Activated naive CD4-positive, alpha-beta T cell treated with anti-CD3 and anti-CD28 coated beads for 36 hours (primary cell): ENCODE measurements at regions of chr14 and their contacts with region 1.

Region 1: DNA sequence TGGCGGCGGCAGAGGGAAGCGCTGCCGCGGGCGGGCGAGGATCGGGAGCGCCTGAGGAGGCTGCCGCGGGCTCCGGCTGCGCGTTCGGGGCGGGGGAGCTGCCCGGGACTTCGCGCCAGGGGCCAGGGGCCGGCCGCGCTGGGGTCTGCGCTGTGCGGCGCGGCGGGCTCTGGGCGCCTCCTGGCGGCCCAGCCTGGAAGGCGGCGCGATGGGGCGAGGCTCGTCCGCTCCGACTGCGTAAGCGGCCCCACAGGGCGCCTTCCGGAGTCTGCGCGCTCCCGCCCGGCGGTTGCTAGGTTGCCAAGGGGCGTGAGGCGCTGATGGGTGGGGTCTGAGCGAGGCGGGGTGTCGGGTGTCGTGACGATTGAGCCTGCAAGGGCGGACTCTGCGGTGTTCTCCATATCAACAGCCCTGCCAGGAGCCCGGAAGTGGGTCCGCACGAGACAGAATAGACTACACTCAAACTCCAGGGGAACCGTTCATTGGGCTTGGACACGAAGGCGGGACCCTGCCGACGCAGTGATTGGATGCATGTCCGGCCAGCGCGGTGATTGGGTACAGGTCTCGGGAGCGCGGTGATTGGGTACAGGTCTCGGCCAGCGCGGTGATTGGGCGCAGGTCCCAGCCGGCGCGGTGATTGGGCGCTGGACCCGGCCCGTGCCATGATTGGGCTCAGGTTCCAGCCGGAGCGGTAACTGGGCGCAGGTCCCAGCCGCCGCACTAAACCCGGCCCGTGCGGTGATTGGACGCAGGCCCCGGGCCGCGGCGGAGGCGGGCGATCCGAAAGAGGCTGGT is at the start of gene TEDC1:
- DNase-seq: peak; percentile 100
- H3K4me3 Mint-ChIP-seq: peak within 1 kb of the TSS; percentile 83
- H3K27ac Mint-ChIP-seq: peak within 1 kb of the TSS; percentile 85
- H3K4me1 Mint-ChIP-seq: peaks cover 31% of the 10 kb centered on the region
- H3K27me3 Mint-ChIP-seq: no peaks in the 10 kb centered on the region
- total RNA-seq, gene TEDC1: 27.8 to 28.6 TPM

Region 2: DNA sequence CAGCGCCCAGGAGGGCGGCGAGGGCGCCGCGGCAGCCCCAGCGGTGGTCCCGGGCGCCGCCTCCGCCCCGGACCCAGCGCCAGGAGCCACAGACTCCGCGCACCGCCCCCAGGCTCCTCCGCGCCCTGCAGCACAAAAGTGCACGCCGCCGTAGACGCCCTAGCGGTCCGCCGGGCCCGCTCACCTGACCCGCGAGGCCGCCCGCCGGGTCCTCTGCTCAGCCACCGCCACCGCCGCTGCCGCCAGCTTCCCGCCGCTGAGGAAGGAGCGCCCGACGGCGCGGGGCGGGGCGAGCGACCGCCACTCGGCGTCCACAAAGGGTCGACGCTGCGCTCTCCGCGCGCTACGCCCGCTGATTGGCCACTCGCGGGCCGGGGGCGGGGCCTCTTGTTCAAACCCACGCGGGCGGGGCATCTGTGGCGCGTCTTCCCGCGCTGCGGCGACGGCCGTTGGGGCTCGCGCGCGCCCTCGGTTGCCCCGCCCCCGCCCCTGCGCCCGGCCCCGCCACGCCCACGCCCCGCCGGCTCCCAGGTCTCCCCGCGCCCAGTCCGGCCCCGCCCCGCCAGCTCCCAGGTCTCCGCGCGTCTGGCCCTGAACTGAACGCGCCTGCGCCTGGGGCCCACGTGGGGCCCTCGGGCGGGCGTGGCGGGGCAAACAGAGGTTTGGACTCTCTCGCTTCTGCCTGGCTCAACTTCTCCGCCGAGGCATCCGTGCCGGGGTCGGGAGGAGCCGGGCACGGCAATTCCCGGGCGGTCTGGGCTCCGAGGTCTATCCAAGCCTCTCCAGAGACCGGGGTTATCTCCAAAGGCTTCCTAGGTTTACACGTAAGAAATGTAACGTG is 469.7 kb before region 1 on chr14 and contains the start of gene CDCA4:
- CTCF ChIA-PET with region 1: no interaction called
- intact Hi-C with region 1: loop called (anchors 1 kb)
- DNase-seq: peak; percentile 98
- H3K4me3 Mint-ChIP-seq: peak within 1 kb of the TSS; percentile 98
- H3K27ac Mint-ChIP-seq: peak within 1 kb of the TSS; percentile 87
- H3K4me1 Mint-ChIP-seq: peaks cover 71% of the 10 kb centered on the region
- H3K27me3 Mint-ChIP-seq: no peaks in the 10 kb centered on the region
- total RNA-seq, gene CDCA4: 59.6 to 60.4 TPM

Region 3: DNA sequence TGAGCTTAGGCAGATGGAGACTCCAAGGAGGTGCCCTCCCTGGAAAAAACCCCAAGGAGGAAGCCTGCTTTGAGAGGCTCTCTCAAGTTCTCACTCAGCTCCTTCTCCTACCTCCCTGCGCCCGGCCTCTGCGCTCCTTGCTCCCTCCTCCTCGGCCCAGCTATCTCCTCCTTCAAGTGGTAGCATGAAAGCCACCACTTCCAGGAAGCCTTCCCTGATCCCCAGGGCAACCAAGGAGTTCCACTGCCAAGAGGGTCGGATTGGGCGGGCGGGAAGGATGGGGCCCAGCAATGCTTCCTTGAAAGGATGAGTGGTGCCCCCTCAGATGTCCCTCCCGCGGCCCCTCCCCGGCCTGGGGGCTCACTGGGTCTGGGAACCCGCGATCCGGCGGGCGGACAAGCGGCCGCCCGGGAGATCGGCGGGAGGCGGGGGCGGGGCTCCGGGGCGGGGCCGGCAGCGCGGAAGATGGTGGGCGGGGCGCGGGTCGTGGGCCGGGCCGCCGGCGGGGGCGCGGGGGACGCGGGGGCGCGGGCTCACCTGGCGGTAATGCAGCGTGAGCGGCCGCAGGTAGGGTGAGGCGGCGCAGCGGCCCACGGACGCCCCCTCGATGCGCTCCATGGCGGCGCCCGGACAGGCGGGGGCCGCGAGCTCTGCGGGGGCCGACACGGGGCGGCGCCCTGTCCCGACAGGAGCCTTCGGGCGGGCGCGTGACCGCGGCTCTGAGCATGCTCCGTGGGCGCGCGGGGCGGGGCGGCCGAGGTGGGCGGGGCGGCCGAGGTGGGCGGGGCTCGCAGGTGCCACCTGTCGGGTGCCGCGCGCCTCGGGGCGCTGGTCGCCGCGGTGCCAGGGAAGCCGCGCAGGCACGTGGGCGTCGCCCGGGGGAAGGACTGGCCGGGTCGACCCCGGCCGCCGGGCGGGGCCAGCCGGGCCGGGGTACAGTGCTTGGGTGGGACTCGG is 309.9 kb before region 1 on chr14 and contains the start of gene NUDT14:
- CTCF ChIA-PET with region 1: no interaction called
- intact Hi-C with region 1: loop called (anchors 5 kb)
- DNase-seq: peak; percentile 86
- H3K4me3 Mint-ChIP-seq: peak within 1 kb of the TSS; percentile 72
- H3K27ac Mint-ChIP-seq: peak within 1 kb of the TSS; percentile 36
- H3K4me1 Mint-ChIP-seq: peaks cover 4% of the 10 kb centered on the region
- H3K27me3 Mint-ChIP-seq: no peaks in the 10 kb centered on the region
- total RNA-seq, gene NUDT14: 12.0 to 15.8 TPM

Region 4: GRCh38 chr14:105369653-105370040 is 121.1 kb before region 1 on chr14:
- CTCF ChIA-PET with region 1: interaction called, 44 read pairs
- intact Hi-C with region 1: loop called (anchors 1 kb)
- DNase-seq: no peak
- H3K4me3 Mint-ChIP-seq: no peak overlapping the region
- H3K27ac Mint-ChIP-seq: no peak overlapping the region
- H3K4me1 Mint-ChIP-seq: peaks cover 4% of the 10 kb centered on the region
- H3K27me3 Mint-ChIP-seq: no peaks in the 10 kb centered on the region

Region 5: GRCh38 chr14:105448706-105449111 is 42.1 kb before region 1 on chr14:
- CTCF ChIA-PET with region 1: interaction called, 3 read pairs
- intact Hi-C with region 1: loop called (anchors 2 kb)
- DNase-seq: peak; percentile 52
- H3K4me3 Mint-ChIP-seq: no peak overlapping the region
- H3K27ac Mint-ChIP-seq: no peak overlapping the region
- H3K4me1 Mint-ChIP-seq: no peaks in the 10 kb centered on the region
- H3K27me3 Mint-ChIP-seq: no peaks in the 10 kb centered on the region